ENCODE measurements at regions of chr6 and their contacts with region 1.

Region 1: DNA sequence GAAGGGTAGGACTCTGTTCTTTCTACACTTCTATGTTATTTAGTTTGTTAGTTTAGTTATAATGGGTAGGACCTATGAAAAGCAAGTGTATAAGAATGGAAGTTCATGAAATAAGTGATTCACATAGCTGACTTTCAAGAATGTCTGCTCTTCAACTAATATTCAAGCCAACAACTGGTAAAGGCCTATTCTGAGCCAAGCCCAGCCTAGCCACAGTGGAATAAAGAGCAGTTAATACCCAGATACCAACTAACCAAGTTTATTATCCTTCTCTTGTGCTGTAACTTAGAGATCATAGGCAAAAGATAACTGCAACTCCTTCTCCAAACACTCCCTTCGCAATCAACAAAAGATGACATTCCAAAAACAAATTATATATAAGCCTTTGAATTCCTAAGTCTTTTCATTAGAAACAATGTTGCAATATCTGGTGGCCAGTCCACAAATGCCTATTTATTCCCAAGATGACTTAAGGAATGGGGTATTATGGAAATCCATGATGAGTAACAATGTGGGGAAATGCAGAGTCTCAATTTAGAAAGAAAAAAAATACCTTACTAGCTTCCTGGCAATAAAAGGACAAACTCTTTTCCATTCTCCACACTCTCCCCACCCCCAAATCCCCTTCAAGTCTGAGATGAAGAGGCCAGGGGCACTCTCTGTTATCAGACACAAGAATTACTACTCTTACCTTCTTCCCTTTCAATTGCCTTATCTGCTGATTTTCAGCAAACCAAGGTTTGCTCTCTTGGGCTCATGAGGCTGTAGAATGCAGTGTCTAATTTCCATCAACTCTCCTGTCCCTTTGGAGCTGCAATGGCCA is 27.4 kb downstream of the BTBD9 start:
- DNase-seq: peak; percentile 67
- H3K4me3 ChIP-seq: no peak overlapping the region
- H3K27me3 ChIP-seq: no peaks in the 10 kb centered on the region
- CTCF ChIP-seq: no peak

Region 2: DNA sequence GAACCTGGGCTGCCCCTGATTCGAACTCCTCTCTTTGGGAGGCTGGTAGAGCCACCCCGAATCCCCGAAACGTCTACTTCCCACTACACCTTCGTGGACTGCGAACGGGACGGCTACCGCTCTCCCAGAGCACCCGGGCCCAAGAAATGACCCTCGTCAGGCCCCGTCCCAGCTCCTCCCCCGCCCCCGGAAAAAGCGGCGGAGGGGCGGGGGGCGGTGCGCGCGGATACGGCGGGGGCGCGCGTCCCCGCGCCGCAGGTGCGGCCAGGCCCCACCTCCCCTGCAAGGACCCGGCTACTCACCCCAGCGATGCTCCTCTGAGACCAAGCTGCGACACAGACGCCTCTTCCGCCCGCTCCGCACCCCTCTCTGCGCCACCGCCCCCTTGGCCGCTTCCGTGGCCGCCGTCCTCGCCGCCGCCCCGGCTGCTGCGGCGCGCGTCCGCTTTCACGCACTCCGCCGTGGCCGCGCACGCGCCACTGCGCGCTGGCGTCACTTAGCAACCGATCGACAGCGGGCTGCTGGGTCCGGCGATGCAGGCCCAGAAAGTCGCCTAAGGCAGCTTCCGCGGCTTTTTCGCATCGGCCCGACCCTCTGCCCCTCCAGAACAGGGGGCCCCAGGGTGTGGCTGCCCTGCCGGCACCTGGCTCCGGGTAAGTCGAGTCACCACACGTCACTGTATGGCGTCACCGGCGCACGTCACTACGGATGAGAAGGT is 27.3 kb after region 1 on chr6 and contains the start of gene BTBD9:
- CTCF ChIA-PET with region 1: no interaction called
- POLR2A ChIA-PET with region 1: interaction called, 14 read pairs
- DNase-seq: peak; percentile 28
- H3K4me3 ChIP-seq: peak within 1 kb of the TSS; percentile 77
- H3K27me3 ChIP-seq: no peaks in the 10 kb centered on the region
- CTCF ChIP-seq: no peak
- polyA plus RNA-seq, gene BTBD9: 5.4 and 6.1 TPM in 2 replicates